ENCODE measurements at regions of chr2 and their contacts with region 1.

Region 1: DNA sequence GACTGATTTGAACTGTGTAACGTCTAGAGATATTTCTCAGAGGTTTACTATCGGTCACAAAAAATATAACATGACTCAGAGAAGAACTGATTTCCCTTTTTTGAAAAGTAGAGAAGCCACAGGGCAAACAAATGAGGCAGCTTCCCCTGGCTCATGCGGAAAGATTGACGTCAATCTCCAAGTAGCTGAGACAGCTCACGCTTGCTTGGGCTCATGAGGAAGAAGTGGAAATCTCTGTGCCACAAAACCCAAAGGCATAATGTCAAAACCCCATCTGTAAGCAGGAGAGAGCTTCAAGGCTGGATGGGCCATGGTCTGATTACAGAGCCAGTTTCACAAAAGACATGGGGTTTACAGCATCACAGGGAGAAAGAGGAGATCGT is 188.1 kb downstream of the ARL4C start:
- DNase-seq: peak; percentile 86
- ATAC-seq: peak; percentile 86
- H3K4me3 Mint-ChIP-seq: peak overlapping the region; percentile 42
- H3K27ac Mint-ChIP-seq: peak overlapping the region; percentile 99
- H3K4me1 Mint-ChIP-seq: peaks cover 66% of the 10 kb centered on the region
- H3K27me3 Mint-ChIP-seq: no peaks in the 10 kb centered on the region

Region 2: DNA sequence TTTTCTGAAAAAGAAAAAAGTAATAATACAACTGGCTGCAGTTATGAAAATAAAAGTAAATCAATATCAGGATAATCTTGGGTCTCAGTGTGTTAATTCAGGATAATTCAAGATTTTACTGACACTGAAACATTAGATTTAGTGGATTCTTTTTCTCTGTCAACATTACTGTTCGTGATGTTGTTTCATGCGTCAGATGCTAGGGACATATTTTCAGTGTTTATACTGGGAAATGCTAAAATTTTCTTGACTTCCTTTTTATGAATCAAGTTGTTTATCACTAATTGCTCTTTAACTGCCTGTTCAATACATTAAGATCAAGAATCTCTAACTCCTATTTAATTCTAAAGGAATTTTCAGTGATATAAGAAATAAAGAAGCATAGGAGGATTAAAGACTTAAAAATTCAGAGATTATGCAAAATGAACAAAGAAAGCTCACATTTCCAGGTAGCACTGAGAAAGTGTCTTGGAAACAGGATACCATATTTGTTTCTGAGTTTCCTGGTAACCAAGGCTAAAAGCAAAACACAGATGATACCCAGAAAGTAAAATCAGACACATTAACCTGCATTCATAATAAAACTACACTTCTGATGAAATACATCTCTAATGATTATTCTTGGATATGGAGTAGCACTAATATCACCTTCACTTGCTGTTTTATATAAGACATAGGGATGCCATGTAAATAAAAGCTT is 14.1 kb after region 1 on chr2:
- CTCF ChIA-PET with region 1: interaction called, 3 read pairs
- POLR2A ChIA-PET with region 1: no interaction called
- intact Hi-C with region 1: loop called in 1 of 2 experiments (anchors 2 kb)
- DNase-seq: no peak
- ATAC-seq: no peak
- H3K4me3 Mint-ChIP-seq: no peak overlapping the region
- H3K27ac Mint-ChIP-seq: peak overlapping the region; percentile 55
- H3K4me1 Mint-ChIP-seq: peaks cover 34% of the 10 kb centered on the region
- H3K27me3 Mint-ChIP-seq: no peaks in the 10 kb centered on the region

Region 3: GRCh38 chr2:234374736-234375135 is 65.9 kb after region 1 on chr2:
- CTCF ChIA-PET with region 1: interaction called, 5 read pairs
- POLR2A ChIA-PET with region 1: no interaction called
- intact Hi-C with region 1: loop called in 1 of 2 experiments (anchors 5 kb)
- DNase-seq: no peak
- ATAC-seq: no peak
- H3K4me3 Mint-ChIP-seq: no peak overlapping the region
- H3K27ac Mint-ChIP-seq: no peak overlapping the region
- H3K4me1 Mint-ChIP-seq: peaks cover 68% of the 10 kb centered on the region
- H3K27me3 Mint-ChIP-seq: no peaks in the 10 kb centered on the region

Region 4: GRCh38 chr2:234451852-234452625 is 143.2 kb after region 1 on chr2:
- CTCF ChIA-PET with region 1: interaction called, 4 read pairs
- POLR2A ChIA-PET with region 1: interaction called, 6 read pairs
- intact Hi-C with region 1: loop called in 1 of 2 experiments (anchors 2 kb)
- DNase-seq: no peak
- ATAC-seq: peak; percentile 34
- H3K4me3 Mint-ChIP-seq: peak overlapping the region; percentile 79
- H3K27ac Mint-ChIP-seq: peak overlapping the region; percentile 93
- H3K4me1 Mint-ChIP-seq: peaks cover 85% of the 10 kb centered on the region
- H3K27me3 Mint-ChIP-seq: no peaks in the 10 kb centered on the region

Region 5: GRCh38 chr2:234488913-234489451 is 180.2 kb after region 1 on chr2:
- CTCF ChIA-PET with region 1: no interaction called
- POLR2A ChIA-PET with region 1: interaction called, 3 read pairs
- intact Hi-C with region 1: loop called (anchors 2 kb)
- DNase-seq: peak; percentile 81
- ATAC-seq: peak; percentile 71
- H3K4me3 Mint-ChIP-seq: peak overlapping the region; percentile 71
- H3K27ac Mint-ChIP-seq: peak overlapping the region; percentile 97
- H3K4me1 Mint-ChIP-seq: peaks cover 85% of the 10 kb centered on the region
- H3K27me3 Mint-ChIP-seq: no peaks in the 10 kb centered on the region

Measured in activated CD4-positive, alpha-beta T cell treated with anti-CD3 and anti-CD28 coated beads for 36 hours (primary cell).